Pancreas (tissue), 10 donors: ENCODE measurements at regions of chr12 and their contacts with region 1.

Region 1: DNA sequence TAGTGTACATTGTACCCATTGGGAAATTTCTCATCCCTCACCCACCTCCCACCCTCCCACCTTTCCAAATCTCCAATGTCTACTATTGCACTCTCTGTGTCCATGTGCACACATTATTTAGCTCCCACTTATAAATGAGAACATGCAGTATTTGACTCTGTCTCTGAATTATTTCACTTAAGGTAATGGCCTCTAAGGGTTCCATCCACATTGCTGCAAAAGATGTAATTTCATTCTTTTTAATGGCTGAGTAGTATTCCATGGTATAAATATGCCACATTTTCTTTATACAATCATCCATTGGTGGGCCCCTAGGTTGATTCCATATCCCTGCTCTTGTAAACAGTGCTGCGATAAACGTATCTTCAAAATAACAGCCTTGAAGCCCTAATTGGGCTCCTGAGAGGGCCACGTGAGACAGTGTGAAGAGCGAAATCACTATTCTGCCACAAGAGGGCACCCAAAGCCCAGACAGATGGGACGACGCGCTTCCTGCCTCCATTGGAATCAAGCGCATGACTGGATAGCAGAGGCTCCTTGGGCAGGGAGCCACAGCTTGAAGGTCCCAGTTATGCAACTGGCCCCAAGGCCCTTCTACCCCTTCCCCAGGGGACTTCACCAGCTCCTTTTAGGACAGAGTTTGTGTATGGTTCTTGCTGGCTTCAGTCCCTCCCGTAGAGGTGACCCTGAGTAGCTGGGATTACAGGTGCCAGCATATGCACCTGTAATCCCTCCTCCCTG is 21.3 kb upstream of the CD27 start:
- DNase-seq: peak; percentile 74 to 90 (median 84)
- ATAC-seq: peak; percentile 95 to 99 (median 98)
- H3K4me3 ChIP-seq: no peak overlapping the region
- H3K27ac ChIP-seq: no peak overlapping the region
- H3K4me1 ChIP-seq: peaks cover 0 to 17% (median 0%) of the 10 kb centered on the region in 3 donors
- H3K27me3 ChIP-seq: no peaks in the 10 kb centered on the region
- CTCF ChIP-seq: peak; percentile 77 to 83 (median 81)

Region 2: GRCh38 chr12:6363611-6364328 is 59.7 kb before region 1 on chr12:
- intact Hi-C with region 1: no loop called
- DNase-seq: peak in 4 of 6 donors; percentile 59 to 87 (median 76)
- ATAC-seq: peak; percentile 72 to 77 (median 76)
- H3K4me3 ChIP-seq: peak overlapping the region; percentile 38 to 63 (median 45)
- H3K27ac ChIP-seq: peak overlapping the region; percentile 63 to 97 (median 88)
- H3K4me1 ChIP-seq: peaks cover 0 to 4% (median 0%) of the 10 kb centered on the region in 3 donors
- H3K27me3 ChIP-seq: no peaks in the 10 kb centered on the region
- CTCF ChIP-seq: no peak

Region 3: DNA sequence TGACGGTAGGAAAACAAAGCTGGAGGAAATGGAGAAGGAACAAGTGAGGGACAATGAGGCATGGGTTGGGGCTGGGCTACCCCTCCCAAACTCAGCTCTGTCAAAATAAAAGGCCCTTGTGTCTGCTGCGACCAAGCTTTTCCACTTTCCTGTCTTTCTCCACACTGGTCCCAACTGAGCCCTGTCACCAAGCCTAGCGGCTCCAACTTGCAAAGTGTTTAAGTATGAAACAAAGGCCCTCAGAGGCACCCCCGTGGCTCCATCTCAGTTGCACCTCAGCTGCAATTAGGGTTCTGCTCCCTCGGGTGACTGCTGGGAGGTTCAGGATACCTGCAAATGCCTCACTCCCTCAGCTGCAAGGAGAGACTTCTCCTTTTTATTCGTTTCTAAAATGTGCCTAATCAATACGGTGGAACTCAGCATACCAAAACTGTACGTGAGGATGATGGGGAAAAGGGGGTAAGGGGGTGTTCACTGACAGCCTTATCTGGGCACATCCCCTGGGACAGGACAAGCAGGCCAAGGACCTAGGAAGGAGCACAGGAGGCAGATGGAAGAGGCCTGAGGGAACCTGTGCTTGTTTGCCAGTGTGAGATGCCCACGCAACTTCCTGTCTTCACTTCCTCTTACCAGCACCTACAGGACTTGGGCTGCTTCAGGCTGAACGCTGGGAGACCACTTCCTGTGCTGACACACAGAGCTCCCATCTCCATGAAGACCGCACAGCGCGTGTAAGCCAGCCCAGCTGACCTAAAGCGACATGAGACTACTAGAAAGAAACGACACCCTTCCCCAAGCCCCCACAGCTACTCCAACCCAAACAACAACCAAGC is 38.2 kb after region 1 on chr12:
- intact Hi-C with region 1: loop called in 2 of 3 experiments (anchors 5 kb)
- DNase-seq: peak in 1 of 6 donors; percentile 64
- ATAC-seq: peak in 3 of 4 donors; percentile 22 to 72 (median 68)
- H3K4me3 ChIP-seq: no peak overlapping the region
- H3K27ac ChIP-seq: peak overlapping the region in 2 of 4 donors; percentile 28 to 51
- H3K4me1 ChIP-seq: no peaks in the 10 kb centered on the region
- H3K27me3 ChIP-seq: no peaks in the 10 kb centered on the region
- CTCF ChIP-seq: no peak

Region 4: GRCh38 chr12:6534945-6535696 is 111.7 kb after region 1 on chr12:
- intact Hi-C with region 1: loop called in 2 of 3 experiments (anchors 5 kb)
- DNase-seq: peak; percentile 62 to 90 (median 76)
- ATAC-seq: peak; percentile 23 to 52 (median 41)
- H3K4me3 ChIP-seq: peak overlapping the region; percentile 94 to 99 (median 96)
- H3K27ac ChIP-seq: peak overlapping the region; percentile 82 to 98 (median 89)
- H3K4me1 ChIP-seq: peaks cover 13 to 15% (median 15%) of the 10 kb centered on the region in 3 donors
- H3K27me3 ChIP-seq: no peaks in the 10 kb centered on the region
- CTCF ChIP-seq: no peak